HCT116 (cell line): ENCODE measurements at regions of chr3 and their contacts with region 1.

Region 1: DNA sequence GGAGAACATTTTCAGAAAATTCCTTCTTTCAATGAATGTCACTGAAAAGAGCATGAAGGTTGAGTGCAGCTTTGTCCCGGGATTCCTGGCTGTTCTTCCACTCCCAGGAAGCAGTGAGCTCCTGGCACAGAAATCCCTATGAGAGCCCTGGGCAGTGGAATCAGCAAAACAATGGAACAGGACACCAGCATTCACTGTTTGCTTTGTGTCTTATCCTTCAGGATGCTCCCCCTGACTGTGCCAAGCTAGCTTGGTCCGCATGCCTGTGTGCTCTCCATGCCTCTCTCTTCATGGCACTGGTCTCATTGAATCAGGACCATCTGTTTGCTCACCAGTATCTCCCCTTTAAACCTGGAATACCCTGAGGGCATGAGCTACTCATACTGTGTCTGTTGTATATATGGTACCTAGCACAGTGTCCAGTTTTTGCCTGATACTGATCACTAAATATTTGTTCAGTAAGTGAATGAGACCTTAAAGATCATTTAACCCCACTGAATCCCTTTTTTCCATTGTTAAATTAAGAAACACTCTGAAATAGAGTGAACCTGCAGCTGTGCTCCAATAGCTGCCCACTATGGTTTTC is 102.1 kb upstream of the GADL1 start:
- DNase-seq: no peak
- ATAC-seq: no peak
- H3K4me3 ChIP-seq: no peak overlapping the region
- H3K27ac ChIP-seq: no peak overlapping the region
- H3K4me1 ChIP-seq: no peaks in the 10 kb centered on the region
- H3K27me3 ChIP-seq: no peaks in the 10 kb centered on the region
- CTCF ChIP-seq: no peak
- POLR2A ChIP-seq: no peak
- RAD21 ChIP-seq: no peak

Region 2: GRCh38 chr3:31022716-31023115 is 26.2 kb after region 1 on chr3:
- CTCF ChIA-PET with region 1: no interaction called
- POLR2A ChIA-PET with region 1: no interaction called
- RAD21 ChIA-PET with region 1: no interaction called
- intact Hi-C with region 1: no loop called
- DNase-seq: no peak
- ATAC-seq: no peak
- H3K4me3 ChIP-seq: no peak overlapping the region
- H3K27ac ChIP-seq: no peak overlapping the region
- H3K4me1 ChIP-seq: no peaks in the 10 kb centered on the region
- H3K27me3 ChIP-seq: no peaks in the 10 kb centered on the region
- CTCF ChIP-seq: no peak
- POLR2A ChIP-seq: no peak
- RAD21 ChIP-seq: no peak

Region 3: DNA sequence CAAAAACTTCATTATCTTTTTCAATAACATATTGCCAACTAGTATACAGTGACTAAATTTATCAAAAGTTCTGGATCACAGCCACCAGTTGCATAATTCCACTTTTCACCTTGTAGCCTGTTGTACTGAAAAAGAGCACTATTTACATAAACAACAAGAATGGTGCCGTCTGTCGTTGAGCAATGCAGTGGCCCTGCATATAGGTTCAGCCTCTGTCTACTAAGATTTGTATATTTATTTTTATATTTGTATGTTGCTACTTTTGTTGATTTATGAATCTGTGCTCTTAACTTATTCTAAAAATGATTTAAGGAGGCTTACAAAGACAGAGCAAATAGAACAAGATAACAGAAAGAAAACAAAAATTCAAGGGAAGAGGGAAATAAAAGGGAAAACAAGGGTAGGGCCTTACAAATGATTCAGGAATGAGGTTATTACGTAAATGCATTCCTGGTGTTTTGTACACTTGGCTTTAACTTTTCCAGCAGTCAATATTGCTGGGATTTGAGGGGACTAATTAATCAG is 278.5 kb after region 1 on chr3:
- CTCF ChIA-PET with region 1: no interaction called
- POLR2A ChIA-PET with region 1: no interaction called
- RAD21 ChIA-PET with region 1: no interaction called
- intact Hi-C with region 1: loop called (anchors 5 kb)
- DNase-seq: no peak
- ATAC-seq: no peak
- H3K4me3 ChIP-seq: no peak overlapping the region
- H3K27ac ChIP-seq: no peak overlapping the region
- H3K4me1 ChIP-seq: peaks cover 0 to 6% of the 10 kb centered on the region in 2 experiments; a peak in 1 of 4 replicates
- H3K27me3 ChIP-seq: no peaks in the 10 kb centered on the region
- CTCF ChIP-seq: no peak
- POLR2A ChIP-seq: no peak
- RAD21 ChIP-seq: no peak